Activated T-helper 1 cell treated with anti-CD3 and anti-CD28 coated beads, Interleukin-12 subunit alpha, Interleukin-12 subunit beta, Interleukin-2, Interleukin-4 antibody, amounts not matched to agents 30 ng/mL and 10 ng/mL and 1 ng/mL, durations not matched to agents 14 hours and 24 hours and 36 hours (primary cell): ENCODE measurements at regions of chr19 and their contacts with region 1.

Region 1: GRCh38 chr19:14571695-14572490 is at the start of gene NDUFB7:
- DNase-seq: peak; percentile 90
- H3K4me3 Mint-ChIP-seq: peak within 1 kb of the TSS; percentile 97
- H3K27ac Mint-ChIP-seq: peak within 1 kb of the TSS; percentile 79
- H3K4me1 Mint-ChIP-seq: peaks cover 29% of the 10 kb centered on the region
- H3K27me3 Mint-ChIP-seq: no peaks in the 10 kb centered on the region
- total RNA-seq, gene NDUFB7: 131 and 133 TPM in 2 replicates

Region 2: GRCh38 chr19:14556662-14557188 is 15.2 kb before region 1 on chr19:
- intact Hi-C with region 1: loop called (anchors 2 kb)
- DNase-seq: peak; percentile 60
- H3K4me3 Mint-ChIP-seq: no peak overlapping the region
- H3K27ac Mint-ChIP-seq: peak overlapping the region; percentile 34
- H3K4me1 Mint-ChIP-seq: peaks cover 11% of the 10 kb centered on the region
- H3K27me3 Mint-ChIP-seq: no peaks in the 10 kb centered on the region

Region 3: DNA sequence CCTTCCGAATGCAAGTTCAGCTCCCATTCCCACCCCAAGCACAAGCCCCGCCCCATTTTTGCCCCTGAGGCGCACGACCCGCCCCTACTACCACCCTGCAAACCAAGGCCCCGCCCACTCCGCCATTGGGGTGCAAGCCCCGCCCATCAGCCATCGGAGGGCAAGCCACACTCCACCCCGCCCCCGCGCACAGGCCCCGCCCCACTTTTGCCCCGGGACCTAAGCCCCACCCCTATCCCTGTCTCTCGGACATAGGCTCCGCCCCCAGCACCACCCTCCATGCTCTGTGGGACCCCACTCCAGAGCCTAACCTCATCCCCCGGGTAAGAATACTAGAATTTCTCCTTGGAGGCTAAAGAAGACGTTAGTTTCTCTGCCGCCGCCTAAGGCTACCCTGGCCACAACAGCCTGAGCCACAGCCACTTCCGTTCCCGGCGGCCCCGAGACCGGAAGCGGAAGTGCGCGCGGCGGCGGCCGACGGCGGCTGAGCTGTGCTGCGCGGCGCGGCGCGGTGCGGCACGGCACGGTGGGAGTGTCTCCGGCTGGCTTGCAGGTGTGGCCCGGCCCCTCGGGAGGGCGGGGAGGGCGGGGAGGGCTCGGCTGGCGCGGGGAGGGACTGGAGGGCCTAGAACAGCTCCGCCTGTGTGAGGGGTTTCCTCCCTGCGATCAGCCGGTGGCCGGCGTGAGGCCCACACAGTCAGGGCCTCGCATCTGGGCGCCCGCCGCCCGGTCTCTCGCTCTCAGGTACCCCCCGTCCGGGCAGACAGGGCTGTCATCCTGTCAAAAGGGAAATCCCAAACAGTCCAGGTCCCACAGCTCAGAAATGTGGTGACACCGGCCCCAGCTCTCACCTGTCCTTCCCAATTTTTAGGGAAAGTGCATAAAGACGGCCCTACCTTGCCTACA is 118.0 kb after region 1 on chr19 and contains the start of gene ZNF333:
- intact Hi-C with region 1: loop called (anchors 1 kb)
- DNase-seq: peak; percentile 94
- H3K4me3 Mint-ChIP-seq: peak within 1 kb of the TSS; percentile 93
- H3K27ac Mint-ChIP-seq: peak within 1 kb of the TSS; percentile 99
- H3K4me1 Mint-ChIP-seq: peaks cover 16% of the 10 kb centered on the region
- H3K27me3 Mint-ChIP-seq: peaks cover 3% of the 10 kb centered on the region
- total RNA-seq, gene ZNF333: 10.0 and 11.1 TPM in 2 replicates

Region 4: DNA sequence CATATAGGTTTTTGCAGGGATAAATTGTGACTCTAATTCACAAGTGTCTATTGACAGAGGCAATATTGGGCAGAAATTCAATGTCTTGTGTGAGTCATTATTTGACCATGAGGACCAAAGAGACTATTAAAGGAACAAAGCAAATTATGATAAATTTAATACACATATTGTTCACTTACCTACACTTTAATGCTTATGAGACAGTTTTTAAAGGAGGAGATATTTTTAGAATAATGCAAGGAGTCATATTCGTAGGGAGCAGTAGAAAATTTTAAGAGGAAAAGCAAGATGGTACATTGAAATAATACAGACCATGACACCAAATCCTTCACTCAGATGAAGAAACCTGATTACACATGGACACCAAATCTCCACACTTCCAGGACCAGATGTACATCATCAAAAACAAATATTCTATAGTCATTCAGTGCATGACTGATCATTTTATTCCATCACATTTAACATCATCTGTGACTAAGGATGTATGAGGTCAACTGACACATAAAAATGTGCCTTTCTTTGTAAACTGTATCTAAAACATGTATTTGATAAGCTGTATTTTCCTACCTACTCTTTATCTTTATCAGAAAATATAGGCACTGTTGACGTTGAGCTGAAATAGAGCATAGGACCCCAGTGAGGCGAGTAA is 318.2 kb after region 1 on chr19:
- intact Hi-C with region 1: loop called (anchors 1 kb)
- DNase-seq: no peak
- H3K4me3 Mint-ChIP-seq: no peak overlapping the region
- H3K27ac Mint-ChIP-seq: no peak overlapping the region
- H3K4me1 Mint-ChIP-seq: peaks cover 6% of the 10 kb centered on the region
- H3K27me3 Mint-ChIP-seq: peaks cover 10% of the 10 kb centered on the region